CD8-positive, alpha-beta T cell (primary cell): ENCODE measurements at regions of chr9 and their contacts with region 1.

Region 1: GRCh38 chr9:98118640-98119601 is at the start of gene TRIM14:
- DNase-seq: peak in 8 of 9 experiments; percentile 31 to 77 (median 60)
- ATAC-seq: peak; percentile 51
- H3K4me3 ChIP-seq: peak within 1 kb of the TSS; percentile 56 to 72
- H3K4me3 Mint-ChIP-seq: peak within 1 kb of the TSS; percentile 86
- H3K27ac ChIP-seq: peak within 1 kb of the TSS; percentile 71 to 92
- H3K27ac Mint-ChIP-seq: peak within 1 kb of the TSS; percentile 97
- H3K4me1 ChIP-seq: peaks cover 48% of the 10 kb centered on the region
- H3K4me1 Mint-ChIP-seq: peaks cover 54% of the 10 kb centered on the region
- H3K27me3 ChIP-seq: no peaks in the 10 kb centered on the region
- H3K27me3 Mint-ChIP-seq: no peaks in the 10 kb centered on the region
- CTCF ChIP-seq: no peak
- total RNA-seq, gene TRIM14: 22.6 to 23.5 TPM

Region 2: GRCh38 chr9:97293207-97293721 is 825.7 kb before region 1 on chr9:
- CTCF ChIA-PET with region 1: no interaction called
- POLR2A ChIA-PET with region 1: no interaction called
- intact Hi-C with region 1: no loop called
- DNase-seq: no peak
- ATAC-seq: no peak
- H3K4me3 ChIP-seq: no peak overlapping the region
- H3K4me3 Mint-ChIP-seq: no peak overlapping the region
- H3K27ac ChIP-seq: no peak overlapping the region
- H3K27ac Mint-ChIP-seq: no peak overlapping the region
- H3K4me1 ChIP-seq: no peaks in the 10 kb centered on the region
- H3K4me1 Mint-ChIP-seq: no peaks in the 10 kb centered on the region
- H3K27me3 ChIP-seq: no peaks in the 10 kb centered on the region
- H3K27me3 Mint-ChIP-seq: no peaks in the 10 kb centered on the region
- CTCF ChIP-seq: no peak

Region 3: DNA sequence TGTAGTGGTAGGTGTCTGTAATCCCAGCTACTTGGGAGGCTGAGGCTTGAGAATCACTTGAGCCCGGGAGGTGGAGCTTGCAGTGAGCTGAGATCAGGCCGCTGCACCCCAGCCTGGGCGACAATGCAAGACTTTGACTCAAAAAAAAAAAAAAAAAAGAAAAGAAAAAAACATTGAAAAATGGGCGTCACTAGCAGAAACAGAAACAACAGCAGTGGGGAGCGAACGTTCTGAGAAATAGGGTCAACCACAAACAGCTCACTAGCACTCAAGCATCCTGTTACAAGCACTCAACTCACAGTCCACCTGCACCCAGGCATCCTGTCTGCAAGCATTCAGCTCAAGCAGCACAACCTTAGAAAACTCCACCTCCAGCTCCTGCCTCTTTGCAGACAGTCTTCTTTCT is 17.1 kb before region 1 on chr9:
- CTCF ChIA-PET with region 1: interaction called, 29 read pairs
- POLR2A ChIA-PET with region 1: interaction called, 30 read pairs
- intact Hi-C with region 1: loop called (anchors 1 to 2 kb)
- DNase-seq: peak; percentile 64 to 97 (median 82)
- ATAC-seq: peak; percentile 95
- H3K4me3 ChIP-seq: peak overlapping the region; percentile 3 to 8
- H3K4me3 Mint-ChIP-seq: peak overlapping the region; percentile 68
- H3K27ac ChIP-seq: peak overlapping the region; percentile 33 to 76
- H3K27ac Mint-ChIP-seq: peak overlapping the region; percentile 97
- H3K4me1 ChIP-seq: peaks cover 87% of the 10 kb centered on the region
- H3K4me1 Mint-ChIP-seq: peaks cover 82% of the 10 kb centered on the region
- H3K27me3 ChIP-seq: no peaks in the 10 kb centered on the region
- H3K27me3 Mint-ChIP-seq: no peaks in the 10 kb centered on the region
- CTCF ChIP-seq: no peak

Region 4: GRCh38 chr9:98108531-98109031 is 10.3 kb before region 1 on chr9:
- CTCF ChIA-PET with region 1: interaction called, 29 read pairs
- POLR2A ChIA-PET with region 1: interaction called, 37 read pairs
- intact Hi-C with region 1: loop called (anchors 1 to 2 kb)
- DNase-seq: peak in 6 of 9 experiments; percentile 30 to 88 (median 56)
- ATAC-seq: peak; percentile 93
- H3K4me3 ChIP-seq: peak overlapping the region in 1 of 2 experiments; percentile 17
- H3K4me3 Mint-ChIP-seq: peak overlapping the region; percentile 65
- H3K27ac ChIP-seq: peak overlapping the region; percentile 45 to 79
- H3K27ac Mint-ChIP-seq: peak overlapping the region; percentile 97
- H3K4me1 ChIP-seq: peaks cover 68% of the 10 kb centered on the region
- H3K4me1 Mint-ChIP-seq: peaks cover 81% of the 10 kb centered on the region
- H3K27me3 ChIP-seq: no peaks in the 10 kb centered on the region
- H3K27me3 Mint-ChIP-seq: no peaks in the 10 kb centered on the region
- CTCF ChIP-seq: no peak

Region 5: GRCh38 chr9:98164912-98165311 is 46.0 kb after region 1 on chr9:
- CTCF ChIA-PET with region 1: no interaction called
- POLR2A ChIA-PET with region 1: no interaction called
- intact Hi-C with region 1: no loop called
- DNase-seq: no peak
- ATAC-seq: no peak
- H3K4me3 ChIP-seq: no peak overlapping the region
- H3K4me3 Mint-ChIP-seq: no peak overlapping the region
- H3K27ac ChIP-seq: no peak overlapping the region
- H3K27ac Mint-ChIP-seq: no peak overlapping the region
- H3K4me1 ChIP-seq: peaks cover 30% of the 10 kb centered on the region
- H3K4me1 Mint-ChIP-seq: peaks cover 58% of the 10 kb centered on the region
- H3K27me3 ChIP-seq: no peaks in the 10 kb centered on the region
- H3K27me3 Mint-ChIP-seq: no peaks in the 10 kb centered on the region
- CTCF ChIP-seq: no peak

Region 6: DNA sequence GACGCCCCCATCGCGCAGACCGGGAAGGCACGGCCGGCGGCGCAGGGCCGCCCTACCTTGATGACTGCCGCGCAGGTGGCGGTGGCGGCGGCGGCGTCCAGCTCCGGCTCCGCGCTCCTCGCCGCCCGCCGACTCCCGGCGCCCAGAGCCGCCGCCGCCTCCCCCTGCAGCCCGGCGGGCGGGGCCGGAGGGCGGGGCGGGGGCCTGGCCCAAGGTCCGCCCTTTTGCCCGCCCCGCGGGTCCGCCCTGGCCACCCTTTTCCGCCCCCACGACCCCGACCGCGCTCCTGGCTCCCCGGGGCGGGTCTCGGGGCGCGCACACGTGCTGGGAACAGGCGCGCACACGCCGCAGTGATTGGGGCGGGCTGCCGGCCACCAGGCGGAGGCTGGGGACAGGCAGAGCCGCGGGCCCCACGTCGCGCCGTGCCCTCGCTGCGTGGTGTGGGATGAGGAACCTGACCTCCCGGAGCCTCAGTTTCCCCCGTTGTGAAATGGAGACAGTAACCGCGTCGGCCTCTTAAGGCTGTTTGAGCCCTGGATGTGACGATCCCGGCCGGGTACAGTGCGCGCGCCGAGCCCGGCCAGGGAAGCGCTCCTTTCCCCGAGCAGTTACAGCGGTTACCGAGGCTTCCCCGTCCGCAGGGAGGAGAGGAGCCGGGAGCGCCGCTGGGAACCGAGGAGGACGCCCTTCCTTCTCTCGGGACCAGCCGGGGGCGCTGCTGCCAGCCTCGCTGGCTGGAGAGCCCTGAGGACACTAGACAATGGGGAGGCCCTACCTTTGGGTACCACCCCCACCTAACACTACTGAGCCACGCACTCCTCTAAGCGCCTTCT is 73.8 kb after region 1 on chr9 and contains the start of gene CORO2A:
- CTCF ChIA-PET with region 1: interaction called, 15 read pairs
- POLR2A ChIA-PET with region 1: interaction called, 13 read pairs
- intact Hi-C with region 1: loop called (anchors 2 kb)
- DNase-seq: peak; percentile 16 to 85 (median 69)
- ATAC-seq: peak; percentile 72
- H3K4me3 ChIP-seq: peak within 1 kb of the TSS; percentile 80 to 84
- H3K4me3 Mint-ChIP-seq: peak within 1 kb of the TSS; percentile 85
- H3K27ac ChIP-seq: peak within 1 kb of the TSS; percentile 39 to 42
- H3K27ac Mint-ChIP-seq: peak within 1 kb of the TSS; percentile 69
- H3K4me1 ChIP-seq: peaks cover 32% of the 10 kb centered on the region
- H3K4me1 Mint-ChIP-seq: peaks cover 40% of the 10 kb centered on the region
- H3K27me3 ChIP-seq: no peaks in the 10 kb centered on the region
- H3K27me3 Mint-ChIP-seq: no peaks in the 10 kb centered on the region
- CTCF ChIP-seq: no peak
- total RNA-seq, gene CORO2A: 6.4 to 6.7 TPM

Region 7: GRCh38 chr9:98207606-98208005 is 88.7 kb after region 1 on chr9:
- CTCF ChIA-PET with region 1: interaction called, 3 read pairs
- POLR2A ChIA-PET with region 1: no interaction called
- intact Hi-C with region 1: loop called in 1 of 2 experiments (anchors 5 kb)
- DNase-seq: no peak
- ATAC-seq: no peak
- H3K4me3 ChIP-seq: no peak overlapping the region
- H3K4me3 Mint-ChIP-seq: no peak overlapping the region
- H3K27ac ChIP-seq: no peak overlapping the region
- H3K27ac Mint-ChIP-seq: no peak overlapping the region
- H3K4me1 ChIP-seq: no peaks in the 10 kb centered on the region
- H3K4me1 Mint-ChIP-seq: peaks cover 5% of the 10 kb centered on the region
- H3K27me3 ChIP-seq: no peaks in the 10 kb centered on the region
- H3K27me3 Mint-ChIP-seq: no peaks in the 10 kb centered on the region
- CTCF ChIP-seq: no peak

Region 8: DNA sequence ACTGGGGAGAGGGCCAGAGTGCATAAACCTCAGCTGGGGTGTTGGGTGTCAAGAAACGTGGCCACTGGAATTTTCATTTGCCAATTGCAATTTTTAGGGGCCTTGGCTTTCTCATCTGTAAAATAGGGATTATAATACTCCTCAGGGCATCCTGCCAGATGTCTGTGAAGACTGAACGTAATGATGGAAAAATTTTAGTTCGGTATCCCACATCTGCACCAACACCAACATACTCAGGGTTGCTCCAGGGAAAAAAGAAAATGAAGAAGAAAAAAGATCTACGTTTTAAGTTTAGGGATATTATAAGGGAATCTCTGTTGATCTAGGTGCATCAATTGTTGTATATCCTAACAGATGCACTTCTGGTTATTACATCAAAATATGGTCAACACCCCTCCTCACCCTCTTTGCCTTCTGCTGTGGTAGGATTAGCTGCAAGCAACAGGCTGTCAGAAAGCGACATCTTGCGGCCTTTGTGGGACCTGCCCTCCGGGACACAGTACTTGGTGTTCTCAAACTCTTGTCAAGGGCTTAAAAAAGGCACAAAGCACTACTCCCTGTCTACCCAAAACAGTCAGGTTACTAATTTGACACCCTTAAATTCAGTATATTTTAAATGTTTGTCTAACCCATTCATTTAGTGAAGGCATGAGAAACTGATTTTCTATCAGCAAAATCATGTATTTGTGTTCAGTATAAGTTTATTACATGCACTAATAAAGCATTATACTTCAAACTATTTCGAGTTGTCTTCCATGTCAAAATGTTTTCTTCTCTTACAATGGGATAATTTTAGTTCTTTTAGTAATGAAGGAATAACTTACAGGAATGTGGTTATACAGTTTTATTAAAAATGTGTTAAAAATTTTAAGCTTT is 144.8 kb after region 1 on chr9:
- CTCF ChIA-PET with region 1: interaction called, 11 read pairs
- POLR2A ChIA-PET with region 1: no interaction called
- intact Hi-C with region 1: loop called (anchors 1 to 2 kb)
- DNase-seq: peak; percentile 70 to 87 (median 84)
- ATAC-seq: peak; percentile 100
- H3K4me3 ChIP-seq: no peak overlapping the region
- H3K4me3 Mint-ChIP-seq: no peak overlapping the region
- H3K27ac ChIP-seq: no peak overlapping the region
- H3K27ac Mint-ChIP-seq: no peak overlapping the region
- H3K4me1 ChIP-seq: no peaks in the 10 kb centered on the region
- H3K4me1 Mint-ChIP-seq: peaks cover 2% of the 10 kb centered on the region
- H3K27me3 ChIP-seq: no peaks in the 10 kb centered on the region
- H3K27me3 Mint-ChIP-seq: no peaks in the 10 kb centered on the region
- CTCF ChIP-seq: peak; percentile 92

Region 9: DNA sequence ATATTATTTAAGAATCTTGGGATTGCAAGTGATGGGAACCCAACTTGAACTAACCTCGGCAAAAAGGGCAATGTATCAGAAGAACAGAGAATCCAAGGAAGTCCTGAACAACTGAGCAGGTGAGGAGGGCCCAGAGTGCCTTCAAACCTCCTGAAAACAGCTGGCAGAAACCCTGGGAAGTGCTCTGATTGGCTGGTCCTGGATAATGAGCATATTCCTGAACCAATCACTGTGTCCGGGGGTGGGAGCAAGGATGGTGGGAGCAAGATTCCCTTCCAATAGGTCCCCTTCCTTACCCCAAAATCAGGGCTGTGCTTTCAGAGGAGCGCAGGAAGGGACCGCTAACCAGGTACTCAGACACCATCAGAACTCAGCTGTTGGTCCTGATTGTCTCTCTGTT is 168.5 kb after region 1 on chr9:
- CTCF ChIA-PET with region 1: no interaction called
- POLR2A ChIA-PET with region 1: no interaction called
- intact Hi-C with region 1: no loop called
- DNase-seq: no peak
- ATAC-seq: no peak
- H3K4me3 ChIP-seq: no peak overlapping the region
- H3K4me3 Mint-ChIP-seq: no peak overlapping the region
- H3K27ac ChIP-seq: no peak overlapping the region
- H3K27ac Mint-ChIP-seq: no peak overlapping the region
- H3K4me1 ChIP-seq: no peaks in the 10 kb centered on the region
- H3K4me1 Mint-ChIP-seq: no peaks in the 10 kb centered on the region
- H3K27me3 ChIP-seq: no peaks in the 10 kb centered on the region
- H3K27me3 Mint-ChIP-seq: peaks cover 10% of the 10 kb centered on the region
- CTCF ChIP-seq: no peak